Lower leg skin (tissue), 4 donors: ENCODE measurements at regions of chr3 and their contacts with region 1.

Region 1: GRCh38 chr3:58414538-58415197 is 19.0 kb downstream of the PDHB start:
- DNase-seq: peak in 1 of 2 donors; percentile 65
- H3K4me3 ChIP-seq: no peak overlapping the region
- CTCF ChIP-seq: peak in 1 of 3 donors; percentile 75
- POLR2A ChIP-seq: no peak

Region 2: DNA sequence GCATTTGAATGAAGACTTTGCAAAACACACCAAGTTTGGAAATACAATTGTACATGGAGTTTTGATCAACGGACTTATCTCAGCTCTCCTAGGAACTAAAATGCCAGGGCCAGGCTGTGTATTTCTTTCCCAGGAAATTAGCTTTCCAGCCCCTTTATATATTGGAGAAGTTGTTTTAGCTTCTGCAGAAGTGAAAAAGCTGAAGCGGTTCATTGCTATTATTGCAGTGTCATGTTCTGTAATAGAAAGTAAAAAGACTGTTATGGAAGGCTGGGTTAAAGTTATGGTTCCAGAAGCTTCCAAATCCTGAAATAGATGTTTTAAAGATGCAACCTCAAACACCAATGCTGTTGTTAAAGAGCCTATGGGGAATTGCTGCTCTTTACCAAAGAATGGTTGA is 96.9 kb before region 1 on chr3:
- intact Hi-C with region 1: loop called (anchors 5 kb)
- DNase-seq: no peak
- H3K4me3 ChIP-seq: no peak overlapping the region
- CTCF ChIP-seq: no peak
- POLR2A ChIP-seq: no peak

Region 3: GRCh38 chr3:58332575-58333188 is 82.0 kb before region 1 on chr3 and contains the start of gene PXK:
- intact Hi-C with region 1: loop called (anchors 5 kb)
- DNase-seq: peak; percentile 62 to 95
- H3K4me3 ChIP-seq: peak within 1 kb of the TSS; percentile 64
- CTCF ChIP-seq: no peak
- POLR2A ChIP-seq: no peak
- total RNA-seq, gene PXK: 19.4 to 27.7 (median 23.9) TPM